HEK293T (cell line): ENCODE measurements at regions of chr20 and their contacts with region 1.

Region 1: DNA sequence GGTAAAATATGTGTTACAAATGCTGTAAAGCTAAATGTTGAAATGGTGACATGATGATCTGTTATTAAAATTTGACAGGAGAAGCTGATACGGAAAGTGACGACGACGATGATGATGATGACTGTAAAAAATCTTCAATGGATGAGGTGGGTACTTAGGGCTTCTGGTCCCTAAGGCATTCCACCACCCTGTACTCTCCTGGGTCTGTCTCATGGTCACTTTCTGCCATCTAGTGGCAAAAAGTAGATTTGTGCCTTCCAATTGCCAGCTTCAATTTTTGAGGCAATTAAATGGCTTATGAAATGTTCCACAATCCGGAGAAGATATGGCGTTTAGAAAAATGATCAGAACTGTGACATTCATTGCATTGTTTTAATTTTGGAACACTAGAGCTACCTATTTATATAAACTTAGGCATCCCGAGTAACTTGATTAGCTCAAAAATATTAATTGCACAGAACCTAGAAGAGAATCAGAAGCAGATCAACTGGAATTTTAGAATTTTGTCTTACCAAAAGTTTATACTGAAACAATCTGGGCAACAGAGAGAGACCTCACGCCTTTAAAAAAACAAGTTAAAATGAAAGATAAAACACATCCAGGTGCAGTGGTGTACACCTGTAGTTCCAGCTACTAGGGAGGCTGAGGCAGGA is 346.5 kb upstream of the PLCB4 start:
- DNase-seq: peak; percentile 59

Region 2: DNA sequence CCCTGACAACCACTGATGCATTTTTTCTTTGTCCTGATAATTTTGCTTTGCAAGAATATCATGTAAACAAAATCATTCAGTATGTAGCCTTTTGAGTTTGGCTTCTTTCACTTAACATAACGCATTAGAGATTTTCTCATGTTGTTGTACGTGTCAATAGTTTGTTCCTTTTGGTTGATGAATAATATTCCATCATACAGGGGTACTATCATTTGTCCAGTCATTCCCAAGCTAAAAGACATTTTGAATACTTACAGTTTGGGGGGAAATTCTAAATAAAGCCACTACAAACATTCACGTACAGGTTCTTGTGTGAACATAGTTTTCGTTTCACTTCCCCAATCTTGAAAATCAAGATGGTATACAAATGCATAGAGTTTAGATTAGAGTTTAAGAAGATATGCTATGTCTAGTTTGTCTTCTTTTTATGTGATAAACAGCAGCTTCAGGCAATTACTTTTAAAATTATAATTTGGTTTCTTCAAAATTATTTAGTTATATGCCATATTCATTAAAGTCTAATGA is 787.3 kb before region 1 on chr20:
- CTCF ChIA-PET with region 1: interaction called, 49 read pairs
- POLR2A ChIA-PET with region 1: no interaction called
- DNase-seq: no peak

Region 3: GRCh38 chr20:8043687-8044282 is 678.6 kb before region 1 on chr20:
- CTCF ChIA-PET with region 1: interaction called, 21 read pairs
- POLR2A ChIA-PET with region 1: interaction called, 3 read pairs
- DNase-seq: peak; percentile 55

Region 4: GRCh38 chr20:8678098-8678776 is 44.2 kb before region 1 on chr20:
- CTCF ChIA-PET with region 1: no interaction called
- POLR2A ChIA-PET with region 1: no interaction called
- DNase-seq: no peak